SK-N-SH (cell line): ENCODE measurements at regions of chr13 and their contacts with region 1.

Region 1: DNA sequence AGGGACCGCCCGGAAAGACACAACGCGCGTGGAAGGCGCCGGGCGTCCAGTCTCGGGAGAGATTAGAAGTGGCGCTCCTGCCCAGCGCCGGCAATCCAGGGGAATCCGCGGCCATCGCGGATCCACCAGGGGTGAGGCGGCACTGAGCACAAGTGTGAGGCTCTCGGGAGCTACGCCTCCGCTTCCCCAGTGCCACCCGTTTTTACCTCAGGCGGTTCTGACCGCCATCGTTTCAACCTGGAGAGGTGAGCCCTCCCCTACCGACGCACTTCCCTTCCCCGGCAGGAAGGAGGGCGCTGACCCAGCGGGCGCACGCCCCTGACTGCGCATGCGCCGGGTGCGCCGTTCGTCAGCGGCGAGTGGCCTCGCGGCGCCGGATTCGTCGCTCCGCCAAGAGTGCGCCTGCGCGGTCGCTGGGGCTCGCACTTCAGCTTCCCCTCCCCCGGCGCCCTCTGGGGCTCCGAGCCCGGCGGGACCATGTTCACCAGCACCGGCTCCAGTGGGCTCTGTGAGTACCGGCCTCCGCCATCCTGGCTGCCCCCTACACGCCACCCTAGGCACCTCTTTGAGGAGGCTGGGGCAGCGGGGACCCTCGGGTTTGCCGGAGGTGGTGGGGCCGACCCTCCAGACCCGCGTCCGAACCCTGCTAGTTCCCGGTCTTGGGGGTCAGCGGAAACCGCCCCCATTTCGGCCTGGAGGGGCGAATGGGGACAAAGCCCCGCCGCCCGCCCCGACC is at the start of gene UBAC2:
- DNase-seq: peak; percentile 99
- H3K4me3 ChIP-seq: peak within 1 kb of the TSS; percentile 95 to 98
- H3K27ac ChIP-seq: peak within 1 kb of the TSS; percentile 88 to 89
- H3K4me1 ChIP-seq: peaks cover 0 to 6% of the 10 kb centered on the region in 2 experiments; a peak in 2 of 4 replicates
- H3K27me3 ChIP-seq: no peaks in the 10 kb centered on the region
- CTCF ChIP-seq: peak; percentile 10; the same call in 1 of the 2 replicates
- EP300 ChIP-seq: no peak
- RAD21 ChIP-seq: no peak
- polyA plus RNA-seq, gene UBAC2: 79.0 and 97.4 TPM in 2 replicates

Region 2: GRCh38 chr13:98717256-98717655 is 483.3 kb before region 1 on chr13:
- CTCF ChIA-PET with region 1: no interaction called
- POLR2A ChIA-PET with region 1: no interaction called
- DNase-seq: no peak
- H3K4me3 ChIP-seq: no peak overlapping the region
- H3K27ac ChIP-seq: no peak overlapping the region
- H3K4me1 ChIP-seq: no peaks in the 10 kb centered on the region
- H3K27me3 ChIP-seq: no peaks in the 10 kb centered on the region; the same call in 1 of the 2 replicates
- CTCF ChIP-seq: no peak
- EP300 ChIP-seq: no peak
- RAD21 ChIP-seq: no peak

Region 3: GRCh38 chr13:99258210-99258860 is 57.7 kb after region 1 on chr13 and contains the start of gene GPR18:
- CTCF ChIA-PET with region 1: interaction called, 17 read pairs
- POLR2A ChIA-PET with region 1: no interaction called
- DNase-seq: no peak
- H3K4me3 ChIP-seq: no peak within 1 kb of the TSS
- H3K27ac ChIP-seq: no peak within 1 kb of the TSS
- H3K4me1 ChIP-seq: no peaks in the 10 kb centered on the region; a peak in 2 of 4 replicates
- H3K27me3 ChIP-seq: no peaks in the 10 kb centered on the region
- CTCF ChIP-seq: no peak
- EP300 ChIP-seq: no peak
- RAD21 ChIP-seq: no peak
- polyA plus RNA-seq, gene GPR18: not detected in 2 replicates

Region 4: GRCh38 chr13:99366075-99366987 is 165.7 kb after region 1 on chr13:
- CTCF ChIA-PET with region 1: no interaction called
- POLR2A ChIA-PET with region 1: no interaction called
- DNase-seq: no peak
- H3K4me3 ChIP-seq: no peak overlapping the region
- H3K27ac ChIP-seq: no peak overlapping the region
- H3K4me1 ChIP-seq: peaks cover 0 to 7% of the 10 kb centered on the region in 2 experiments; a peak in 1 of 4 replicates
- H3K27me3 ChIP-seq: no peaks in the 10 kb centered on the region
- CTCF ChIP-seq: no peak
- EP300 ChIP-seq: no peak
- RAD21 ChIP-seq: no peak